Endothelial cell of umbilical vein (primary cell): ENCODE measurements at regions of chrX and their contacts with region 1.

Region 1: DNA sequence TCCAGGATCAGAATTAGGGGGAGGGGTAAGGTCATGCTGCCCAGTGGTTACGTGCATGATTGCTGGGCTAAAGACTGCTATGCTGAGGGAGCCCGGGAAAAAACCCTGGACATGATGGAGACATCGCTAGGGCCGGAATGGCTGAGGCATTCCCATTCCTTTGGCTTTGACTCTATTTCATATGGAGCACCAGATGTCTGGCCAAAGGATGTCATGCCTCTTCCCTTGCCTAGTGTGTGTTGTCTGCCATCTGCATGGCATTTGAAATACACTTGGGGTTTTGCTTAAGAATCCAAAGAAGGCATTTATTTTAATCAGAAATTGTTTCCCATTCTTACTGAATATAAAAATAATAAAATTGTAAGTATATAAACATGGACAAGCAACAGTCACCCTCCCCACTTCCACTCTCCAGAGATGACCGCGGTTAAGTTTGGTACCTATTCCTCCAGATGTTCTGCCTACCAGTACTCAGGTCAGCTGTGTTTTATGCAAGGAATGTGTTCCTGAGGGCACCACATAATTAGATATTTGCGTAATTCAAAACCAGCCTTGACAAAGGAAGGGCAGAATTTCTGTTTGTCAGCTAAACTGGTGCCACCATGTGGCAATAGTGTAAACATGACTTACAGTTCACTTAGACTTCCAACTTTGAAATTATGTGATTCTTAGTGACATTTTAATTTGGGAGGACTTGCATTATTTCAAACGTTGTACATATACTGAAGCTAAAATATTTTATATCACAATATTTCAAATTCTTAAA is 105.9 kb downstream of the CT47B1 start:
- DNase-seq: peak; percentile 68
- H3K4me3 ChIP-seq: no peak overlapping the region
- H3K27ac ChIP-seq: peak overlapping the region; percentile 96
- H3K4me1 ChIP-seq: peaks cover 24% of the 10 kb centered on the region
- H3K27me3 ChIP-seq: no peaks in the 10 kb centered on the region
- CTCF ChIP-seq: peak in 1 of 2 donors; percentile 23
- POLR2A ChIP-seq: no peak

Region 2: DNA sequence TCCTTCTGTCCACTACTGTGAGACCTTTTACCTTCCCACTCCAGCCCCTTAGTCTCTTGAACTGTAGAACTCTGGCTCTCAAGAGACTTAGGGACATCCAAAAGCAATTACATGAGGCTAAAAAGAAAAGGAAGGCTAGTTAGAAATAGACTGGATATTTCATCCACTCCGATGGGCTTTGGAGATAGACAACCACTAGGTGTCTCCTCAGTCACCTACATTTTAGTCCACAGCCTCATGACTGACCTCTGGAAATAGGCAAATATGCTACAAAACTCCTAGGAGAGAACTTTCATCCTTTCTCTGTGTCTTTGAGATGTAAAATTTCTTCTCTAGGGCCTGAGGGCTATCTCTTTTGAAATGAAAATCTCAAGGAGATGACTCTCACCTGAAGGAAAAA is 255.5 kb before region 1 on chrX:
- CTCF ChIA-PET with region 1: interaction called, 3 read pairs
- POLR2A ChIA-PET with region 1: no interaction called
- dilution Hi-C with region 1: no loop called
- intact Hi-C with region 1: loop called (anchors 2 kb)
- DNase-seq: peak; percentile 7
- H3K4me3 ChIP-seq: no peak overlapping the region
- H3K27ac ChIP-seq: no peak overlapping the region
- H3K4me1 ChIP-seq: peaks cover 7% of the 10 kb centered on the region
- H3K27me3 ChIP-seq: no peaks in the 10 kb centered on the region
- CTCF ChIP-seq: peak; percentile 14 to 33
- POLR2A ChIP-seq: no peak

Region 3: GRCh38 chrX:120560842-120561633 is 208.7 kb before region 1 on chrX and contains the start of gene CUL4B:
- CTCF ChIA-PET with region 1: no interaction called
- POLR2A ChIA-PET with region 1: no interaction called
- dilution Hi-C with region 1: no loop called
- intact Hi-C with region 1: loop called (anchors 1 kb)
- DNase-seq: peak; percentile 95
- H3K4me3 ChIP-seq: peak within 1 kb of the TSS; percentile 81 to 99 (median 98)
- H3K27ac ChIP-seq: peak within 1 kb of the TSS; percentile 94
- H3K4me1 ChIP-seq: peaks cover 22% of the 10 kb centered on the region
- H3K27me3 ChIP-seq: no peaks in the 10 kb centered on the region
- CTCF ChIP-seq: no peak
- POLR2A ChIP-seq: peak; percentile 75
- total RNA-seq, gene CUL4B: 84.3 and 90.0 TPM in 2 replicates

Region 4: GRCh38 chrX:120664081-120664480 is 105.7 kb before region 1 on chrX:
- CTCF ChIA-PET with region 1: interaction called, 5 read pairs
- POLR2A ChIA-PET with region 1: no interaction called
- dilution Hi-C with region 1: no loop called
- intact Hi-C with region 1: loop called (anchors 2 kb)
- DNase-seq: peak; percentile 46
- H3K4me3 ChIP-seq: no peak overlapping the region
- H3K27ac ChIP-seq: no peak overlapping the region
- H3K4me1 ChIP-seq: peaks cover 5% of the 10 kb centered on the region
- H3K27me3 ChIP-seq: no peaks in the 10 kb centered on the region
- CTCF ChIP-seq: no peak
- POLR2A ChIP-seq: no peak

Region 5: GRCh38 chrX:120736989-120737388 is 32.8 kb before region 1 on chrX:
- CTCF ChIA-PET with region 1: interaction called, 3 read pairs
- POLR2A ChIA-PET with region 1: no interaction called
- dilution Hi-C with region 1: no loop called
- intact Hi-C with region 1: loop called (anchors 1 kb)
- DNase-seq: peak; percentile 80
- H3K4me3 ChIP-seq: no peak overlapping the region
- H3K27ac ChIP-seq: peak overlapping the region; percentile 49
- H3K4me1 ChIP-seq: peaks cover 28% of the 10 kb centered on the region
- H3K27me3 ChIP-seq: no peaks in the 10 kb centered on the region
- CTCF ChIP-seq: no peak
- POLR2A ChIP-seq: peak; percentile 26

Region 6: GRCh38 chrX:120797188-120797851 is 27.6 kb after region 1 on chrX:
- CTCF ChIA-PET with region 1: no interaction called
- POLR2A ChIA-PET with region 1: no interaction called
- dilution Hi-C with region 1: no loop called
- intact Hi-C with region 1: loop called (anchors 1 kb)
- DNase-seq: peak; percentile 78
- H3K4me3 ChIP-seq: no peak overlapping the region
- H3K27ac ChIP-seq: peak overlapping the region; percentile 86
- H3K4me1 ChIP-seq: peaks cover 54% of the 10 kb centered on the region
- H3K27me3 ChIP-seq: no peaks in the 10 kb centered on the region
- CTCF ChIP-seq: no peak
- POLR2A ChIP-seq: no peak

Region 7: GRCh38 chrX:121014591-121015225 is 244.9 kb after region 1 on chrX:
- CTCF ChIA-PET with region 1: no interaction called
- POLR2A ChIA-PET with region 1: no interaction called
- dilution Hi-C with region 1: no loop called
- intact Hi-C with region 1: no loop called
- DNase-seq: no peak
- H3K4me3 ChIP-seq: no peak overlapping the region
- H3K27ac ChIP-seq: no peak overlapping the region
- H3K4me1 ChIP-seq: no peaks in the 10 kb centered on the region
- H3K27me3 ChIP-seq: no peaks in the 10 kb centered on the region
- CTCF ChIP-seq: no peak
- POLR2A ChIP-seq: no peak

Region 8: DNA sequence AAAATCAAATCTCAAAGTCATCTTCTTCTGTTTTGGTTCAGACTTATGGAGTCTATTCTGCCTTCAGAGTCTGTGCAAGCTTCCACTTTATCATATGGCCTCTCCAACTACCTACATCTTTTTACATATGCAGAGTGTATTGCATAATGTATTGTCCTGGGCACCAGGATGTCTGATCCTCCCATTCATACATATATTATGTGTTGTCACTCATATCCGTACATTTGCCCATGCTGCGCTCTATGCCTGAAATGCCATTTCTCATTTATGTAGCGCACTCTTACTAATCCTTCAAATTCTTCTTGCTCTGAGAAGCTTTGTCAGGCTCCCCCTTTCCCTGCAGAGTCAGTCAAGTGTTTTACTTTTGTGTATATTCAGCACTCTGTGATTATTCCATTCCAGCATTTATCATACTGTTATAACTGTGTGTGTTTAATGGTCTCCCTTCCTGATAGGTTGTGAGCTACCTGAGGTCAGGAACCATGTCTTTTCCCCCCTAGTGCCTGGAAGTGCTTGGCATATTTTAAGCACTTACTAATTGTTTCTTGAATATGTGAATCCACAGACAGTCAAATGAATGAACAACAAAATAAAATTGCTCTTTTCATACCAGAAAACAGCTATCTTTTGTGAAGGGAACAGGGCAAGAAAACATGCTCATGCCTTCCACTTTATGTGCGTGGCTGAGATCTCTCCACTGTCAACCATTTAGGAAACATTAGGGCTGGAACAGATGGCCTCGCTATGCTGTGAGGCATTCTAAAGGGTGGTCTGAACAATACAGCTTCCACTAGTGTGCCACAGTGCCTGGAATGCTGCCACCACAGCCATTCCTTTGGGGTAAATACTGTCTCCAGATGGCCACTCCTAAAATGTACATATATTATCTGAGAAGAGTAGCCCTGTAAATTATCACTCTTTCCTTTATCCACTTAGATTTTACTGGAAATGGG is 359.4 kb after region 1 on chrX:
- CTCF ChIA-PET with region 1: no interaction called
- POLR2A ChIA-PET with region 1: no interaction called
- dilution Hi-C with region 1: no loop called
- intact Hi-C with region 1: no loop called
- DNase-seq: no peak
- H3K4me3 ChIP-seq: no peak overlapping the region
- H3K27ac ChIP-seq: no peak overlapping the region
- H3K4me1 ChIP-seq: no peaks in the 10 kb centered on the region
- H3K27me3 ChIP-seq: no peaks in the 10 kb centered on the region
- CTCF ChIP-seq: no peak
- POLR2A ChIP-seq: no peak